ENCODE measurements at regions of chr5 and their contacts with region 1.

Region 1: DNA sequence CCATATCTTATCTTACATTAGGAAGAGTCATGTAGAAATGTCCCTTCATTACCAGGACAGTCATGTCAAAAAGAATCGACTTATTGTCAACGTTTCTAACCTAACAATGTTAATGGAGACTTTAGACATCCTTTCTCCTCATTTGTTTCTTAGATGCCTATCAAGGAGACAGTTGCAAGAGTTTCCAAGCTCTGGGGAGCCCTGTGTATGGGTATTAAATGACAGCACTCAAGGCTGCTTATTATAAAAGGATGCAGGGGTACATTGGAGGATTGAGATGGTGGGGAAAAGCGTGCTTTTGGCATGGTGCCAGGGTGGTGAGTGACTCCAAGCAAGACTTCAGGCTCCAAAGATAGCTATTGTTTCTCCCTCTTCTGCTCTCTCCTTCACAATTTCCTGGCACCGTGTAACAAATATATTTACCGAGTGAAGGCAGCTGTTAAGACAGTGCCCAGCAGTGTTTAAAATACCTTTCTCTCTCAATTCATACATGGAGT is 461.3 kb upstream of the CLINT1 start:
- DNase-seq: no peak
- ATAC-seq: no peak
- H3K4me3 ChIP-seq: no peak overlapping the region
- H3K27ac ChIP-seq: no peak overlapping the region
- H3K4me1 ChIP-seq: no peaks in the 10 kb centered on the region
- H3K27me3 ChIP-seq: no peaks in the 10 kb centered on the region
- CTCF ChIP-seq: no peak

Region 2: DNA sequence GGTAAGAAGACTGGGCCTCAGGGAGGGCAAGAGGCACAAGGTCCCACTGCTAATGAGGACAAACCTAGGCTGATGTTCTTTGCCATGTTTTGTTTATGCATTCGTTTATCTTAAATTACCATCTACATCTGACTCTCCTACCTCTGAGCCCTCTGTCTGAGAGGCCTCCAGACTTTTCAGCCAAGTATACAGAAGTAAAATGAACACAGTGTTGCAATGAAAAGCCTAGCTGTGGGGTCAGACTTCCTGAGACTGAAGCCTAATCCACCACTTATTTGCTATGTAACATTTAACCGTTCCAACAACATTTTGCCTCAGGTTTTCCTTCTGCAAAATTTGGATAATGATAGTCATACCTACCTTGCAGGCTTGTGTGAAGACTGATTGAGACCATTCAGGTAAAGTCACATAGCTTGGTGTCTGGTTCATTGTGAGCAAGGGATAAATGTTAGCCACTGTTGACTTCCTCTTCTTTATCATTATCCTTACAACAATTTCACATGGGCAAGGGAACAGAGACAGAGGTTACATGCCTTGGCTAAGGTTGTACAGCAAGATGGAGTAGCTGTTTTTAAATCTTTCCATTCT is 86.4 kb before region 1 on chr5:
- CTCF ChIA-PET with region 1: no interaction called
- POLR2A ChIA-PET with region 1: no interaction called
- in situ Hi-C with region 1: no loop called
- intact Hi-C with region 1: no loop called
- DNase-seq: no peak
- ATAC-seq: no peak
- H3K4me3 ChIP-seq: no peak overlapping the region
- H3K27ac ChIP-seq: no peak overlapping the region
- H3K4me1 ChIP-seq: no peaks in the 10 kb centered on the region
- H3K27me3 ChIP-seq: no peaks in the 10 kb centered on the region
- CTCF ChIP-seq: no peak

Region 3: GRCh38 chr5:158857976-158858375 is 537.8 kb after region 1 on chr5:
- CTCF ChIA-PET with region 1: no interaction called
- POLR2A ChIA-PET with region 1: no interaction called
- in situ Hi-C with region 1: no loop called
- intact Hi-C with region 1: loop called (anchors 5 kb)
- DNase-seq: no peak
- ATAC-seq: no peak
- H3K4me3 ChIP-seq: no peak overlapping the region
- H3K27ac ChIP-seq: no peak overlapping the region
- H3K4me1 ChIP-seq: no peaks in the 10 kb centered on the region
- H3K27me3 ChIP-seq: no peaks in the 10 kb centered on the region; the same call in 1 of the 2 replicates
- CTCF ChIP-seq: no peak